BJ (cell line): ENCODE measurements at regions of chr1 and their contacts with region 1.

Region 1: GRCh38 chr1:200877839-200878551 is 5.2 kb downstream of the GPR25 start:
- DNase-seq: no peak
- H3K4me3 ChIP-seq: no peak overlapping the region
- H3K27me3 ChIP-seq: peaks cover 22% of the 10 kb centered on the region
- CTCF ChIP-seq: no peak

Region 2: DNA sequence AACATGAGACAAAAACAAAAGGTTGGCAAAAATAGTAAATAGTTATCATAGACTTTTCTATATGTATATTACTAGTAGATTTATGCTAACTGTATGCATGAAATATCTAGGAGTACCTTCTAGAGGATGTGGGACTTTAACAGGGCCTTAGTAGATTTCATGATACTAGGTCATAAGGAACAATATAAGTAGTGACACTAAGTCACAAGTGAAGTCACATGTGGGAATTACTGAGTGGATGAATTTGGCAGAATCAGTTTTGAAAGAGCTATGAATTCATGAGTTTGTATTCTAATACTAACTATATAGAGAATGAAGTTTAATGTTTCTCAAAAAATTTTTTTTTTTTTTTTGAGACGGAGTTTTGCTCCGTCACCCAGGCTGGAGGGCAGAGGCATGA is 58.3 kb before region 1 on chr1:
- CTCF ChIA-PET with region 1: no interaction called
- POLR2A ChIA-PET with region 1: no interaction called
- DNase-seq: no peak
- H3K4me3 ChIP-seq: no peak overlapping the region
- H3K27me3 ChIP-seq: no peaks in the 10 kb centered on the region
- CTCF ChIP-seq: no peak

Region 3: GRCh38 chr1:200903793-200904192 is 25.8 kb after region 1 on chr1:
- CTCF ChIA-PET with region 1: no interaction called
- POLR2A ChIA-PET with region 1: interaction called, 13 read pairs
- DNase-seq: no peak
- H3K4me3 ChIP-seq: no peak overlapping the region
- H3K27me3 ChIP-seq: peaks cover 3% of the 10 kb centered on the region; the same call in 1 of the 2 replicates
- CTCF ChIP-seq: no peak

Region 4: GRCh38 chr1:201065686-201066085 is 187.7 kb after region 1 on chr1:
- CTCF ChIA-PET with region 1: no interaction called
- POLR2A ChIA-PET with region 1: interaction called, 12 read pairs
- DNase-seq: no peak
- H3K4me3 ChIP-seq: no peak overlapping the region
- H3K27me3 ChIP-seq: peaks cover 12% of the 10 kb centered on the region
- CTCF ChIP-seq: no peak